CD14-positive monocyte (primary cell): ENCODE measurements at regions of chr2 and their contacts with region 1.

Region 1: GRCh38 chr2:70553584-70554337 is at the start of gene TGFA:
- DNase-seq: peak; percentile 61 to 69 (median 67)
- H3K4me3 ChIP-seq: peak within 1 kb of the TSS; percentile 47 to 83 (median 66)
- H3K4me3 Mint-ChIP-seq: peak within 1 kb of the TSS; percentile 86 to 99
- H3K27ac ChIP-seq: peak within 1 kb of the TSS in 1 of 2 donors; percentile 49
- H3K27ac Mint-ChIP-seq: peak within 1 kb of the TSS; percentile 57 to 87 (median 75)
- H3K4me1 ChIP-seq: peaks cover 21% of the 10 kb centered on the region in 2 donors
- H3K4me1 Mint-ChIP-seq: peaks cover 19% of the 10 kb centered on the region
- H3K27me3 ChIP-seq: peaks cover 20 to 41% of the 10 kb centered on the region in 2 donors
- H3K27me3 Mint-ChIP-seq: peaks cover 47 to 61% (median 49%) of the 10 kb centered on the region in 3 donors
- CTCF ChIP-seq: peak; percentile 94
- polyA plus RNA-seq, gene TGFA: 1.7 to 2.5 (median 1.7) TPM

Region 2: GRCh38 chr2:70340921-70341765 is 212.6 kb before region 1 on chr2:
- intact Hi-C with region 1: no loop called
- DNase-seq: peak; percentile 15 to 48 (median 41)
- H3K4me3 ChIP-seq: no peak overlapping the region
- H3K4me3 Mint-ChIP-seq: no peak overlapping the region
- H3K27ac ChIP-seq: no peak overlapping the region
- H3K27ac Mint-ChIP-seq: no peak overlapping the region
- H3K4me1 ChIP-seq: no peaks in the 10 kb centered on the region
- H3K4me1 Mint-ChIP-seq: no peaks in the 10 kb centered on the region
- H3K27me3 ChIP-seq: peaks cover 0 to 2% of the 10 kb centered on the region in 2 donors
- H3K27me3 Mint-ChIP-seq: peaks cover 2 to 16% (median 5%) of the 10 kb centered on the region in 3 donors
- CTCF ChIP-seq: peak; percentile 91

Region 3: GRCh38 chr2:70391988-70392387 is 161.8 kb before region 1 on chr2:
- intact Hi-C with region 1: no loop called
- DNase-seq: no peak
- H3K4me3 ChIP-seq: no peak overlapping the region
- H3K4me3 Mint-ChIP-seq: no peak overlapping the region
- H3K27ac ChIP-seq: no peak overlapping the region
- H3K27ac Mint-ChIP-seq: no peak overlapping the region
- H3K4me1 ChIP-seq: no peaks in the 10 kb centered on the region
- H3K4me1 Mint-ChIP-seq: no peaks in the 10 kb centered on the region
- H3K27me3 ChIP-seq: no peaks in the 10 kb centered on the region
- H3K27me3 Mint-ChIP-seq: peaks cover 0 to 2% (median 2%) of the 10 kb centered on the region in 3 donors
- CTCF ChIP-seq: no peak

Region 4: DNA sequence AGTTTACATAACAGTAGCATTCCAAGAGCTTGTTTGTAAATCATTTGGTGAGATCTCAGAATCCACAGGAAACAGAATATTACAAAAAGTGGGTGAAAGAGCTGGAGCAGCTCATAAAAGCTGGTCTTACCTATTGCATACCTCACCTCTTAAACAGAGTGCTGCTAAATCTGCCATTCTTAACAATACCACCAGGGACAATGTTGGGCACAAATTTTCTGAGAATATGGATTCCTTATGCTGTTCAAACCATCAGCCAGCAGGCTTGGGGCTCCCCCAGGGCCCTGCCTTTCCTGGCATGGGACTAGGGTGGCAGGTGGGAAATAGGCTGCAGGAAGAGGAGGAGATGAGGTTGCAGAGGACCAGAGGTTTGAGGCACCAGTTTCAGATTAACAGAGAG is 55.7 kb before region 1 on chr2:
- intact Hi-C with region 1: loop called in 1 of 2 experiments (anchors 10 kb)
- DNase-seq: no peak
- H3K4me3 ChIP-seq: no peak overlapping the region
- H3K4me3 Mint-ChIP-seq: no peak overlapping the region
- H3K27ac ChIP-seq: no peak overlapping the region
- H3K27ac Mint-ChIP-seq: no peak overlapping the region
- H3K4me1 ChIP-seq: no peaks in the 10 kb centered on the region
- H3K4me1 Mint-ChIP-seq: peaks cover 1% of the 10 kb centered on the region
- H3K27me3 ChIP-seq: no peaks in the 10 kb centered on the region
- H3K27me3 Mint-ChIP-seq: peaks cover 1 to 7% (median 3%) of the 10 kb centered on the region in 3 donors
- CTCF ChIP-seq: peak; percentile 63

Region 5: DNA sequence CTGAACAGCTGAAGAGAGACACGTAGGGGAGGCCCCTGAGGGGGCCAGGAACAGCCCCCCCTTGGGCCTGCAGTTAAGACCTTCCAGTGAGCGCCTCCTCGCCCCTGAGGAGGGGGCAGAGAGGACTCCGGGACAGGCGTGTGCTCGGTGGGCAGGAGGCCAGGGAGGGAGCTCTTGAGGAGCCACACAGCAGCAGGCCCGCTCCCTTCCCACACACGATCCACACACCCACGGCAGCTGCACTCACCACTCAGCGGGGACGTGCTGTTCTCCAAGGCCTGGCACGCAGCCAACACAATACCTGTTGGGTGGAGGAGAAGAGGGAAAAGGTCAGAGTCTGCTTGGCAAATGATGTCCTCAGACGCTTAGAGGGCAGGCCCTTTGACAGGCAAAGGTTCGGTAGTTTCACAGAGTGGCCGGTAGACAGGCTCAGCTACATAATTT is 39.1 kb before region 1 on chr2:
- intact Hi-C with region 1: loop called in 1 of 2 experiments (anchors 5 kb)
- DNase-seq: no peak
- H3K4me3 ChIP-seq: no peak overlapping the region
- H3K4me3 Mint-ChIP-seq: no peak overlapping the region
- H3K27ac ChIP-seq: no peak overlapping the region
- H3K27ac Mint-ChIP-seq: peak overlapping the region in 2 of 7 donors; percentile 43 to 75
- H3K4me1 ChIP-seq: peaks cover 50% of the 10 kb centered on the region in 2 donors
- H3K4me1 Mint-ChIP-seq: peaks cover 56% of the 10 kb centered on the region
- H3K27me3 ChIP-seq: no peaks in the 10 kb centered on the region
- H3K27me3 Mint-ChIP-seq: peaks cover 0 to 4% (median 0%) of the 10 kb centered on the region in 3 donors
- CTCF ChIP-seq: no peak